ENCODE measurements at regions of chr3 and their contacts with region 1.

Region 1: DNA sequence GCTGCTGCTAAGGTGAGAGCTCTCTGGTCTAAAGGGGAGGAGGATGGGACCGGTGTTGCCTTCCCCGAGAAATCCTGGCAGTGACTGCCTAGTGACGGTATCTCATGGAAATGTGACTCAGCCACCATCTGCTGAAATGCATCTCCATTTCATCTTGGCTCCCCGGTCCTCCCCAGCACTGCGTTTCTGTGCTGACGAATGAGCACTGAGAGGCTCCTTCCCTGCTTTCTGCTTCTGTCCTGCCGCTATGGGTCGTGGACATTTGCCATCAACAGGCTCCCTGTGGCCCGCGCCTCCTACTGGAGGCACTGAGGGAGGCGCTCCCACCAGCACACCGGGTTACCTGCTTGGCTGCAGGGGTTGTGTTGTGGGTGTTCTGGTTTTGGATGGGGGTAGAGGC is 13.5 kb upstream of the SEC13 start:
- DNase-seq: no peak
- H3K4me3 ChIP-seq: no peak overlapping the region
- H3K27ac ChIP-seq: no peak overlapping the region
- H3K4me1 ChIP-seq: peaks cover 0 to 53% (median 43%) of the 10 kb centered on the region in 4 experiments
- H3K27me3 ChIP-seq: peaks cover 0 to 10% (median 1%) of the 10 kb centered on the region in 5 experiments

Region 2: DNA sequence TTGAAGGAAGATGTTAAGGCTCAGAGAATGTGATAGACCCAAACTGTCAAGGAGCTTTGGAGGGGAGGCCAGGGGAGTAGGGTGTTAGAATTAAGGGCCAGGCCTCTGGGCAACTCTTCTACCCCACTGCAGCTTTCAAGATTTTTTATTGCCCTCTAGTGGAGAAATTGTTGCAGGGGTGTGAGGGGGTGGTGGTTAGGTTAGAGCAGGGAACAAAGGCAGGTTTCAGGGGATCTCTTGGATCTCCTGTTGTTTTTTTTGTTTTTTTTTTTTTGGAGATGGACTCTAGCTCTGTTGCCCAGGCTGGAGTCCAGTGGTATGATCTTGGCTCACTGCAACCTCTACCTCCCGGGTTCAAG is 12.1 kb before region 1 on chr3:
- CTCF ChIA-PET with region 1: interaction called, 15 read pairs
- POLR2A ChIA-PET with region 1: no interaction called
- DNase-seq: peak; percentile 37 to 57 (median 49)
- H3K4me3 ChIP-seq: no peak overlapping the region
- H3K27ac ChIP-seq: no peak overlapping the region
- H3K4me1 ChIP-seq: peaks cover 7 to 20% (median 15%) of the 10 kb centered on the region in 4 experiments
- H3K27me3 ChIP-seq: peaks cover 0 to 7% (median 4%) of the 10 kb centered on the region in 5 experiments

Measured in common myeloid progenitor, CD34-positive (primary cell).